IMR-90 (cell line): ENCODE measurements at regions of chr17 and their contacts with region 1.

Region 1: DNA sequence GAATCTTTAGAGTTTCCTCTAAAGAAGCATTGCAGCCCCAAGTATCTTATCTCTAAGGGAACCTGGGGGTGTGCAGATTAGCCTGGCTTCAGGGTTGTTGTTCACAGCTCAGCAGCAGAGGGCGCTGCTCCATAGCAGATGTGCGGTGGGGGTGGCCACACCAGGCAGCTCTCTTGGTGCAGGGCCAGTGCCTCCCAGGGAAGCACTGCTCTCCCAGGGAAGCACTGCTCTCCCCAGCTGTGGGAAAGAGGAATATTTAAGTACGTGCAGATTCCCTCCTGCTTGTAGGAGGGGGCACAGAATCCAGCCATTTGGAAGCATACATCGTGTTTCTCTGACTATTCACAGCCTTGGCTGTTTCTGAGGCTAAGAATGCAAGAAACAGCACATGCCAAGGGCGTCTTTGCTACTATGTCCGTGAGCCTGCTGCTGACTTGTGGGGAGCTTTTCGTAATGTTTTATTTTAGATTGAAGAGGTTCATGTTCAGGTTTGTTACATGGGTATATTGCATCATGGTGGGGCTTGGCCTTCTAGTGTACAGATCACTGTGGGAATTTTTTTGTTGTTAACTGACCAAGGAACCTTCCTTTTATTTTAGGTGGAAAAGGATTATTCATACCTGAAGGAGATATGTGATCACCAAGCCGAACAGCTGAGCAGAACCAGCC is 217.8 kb downstream of the SPECC1 start:
- DNase-seq: peak; percentile 83
- ATAC-seq: peak; percentile 90
- H3K4me3 ChIP-seq: no peak overlapping the region
- H3K27ac ChIP-seq: peak overlapping the region; percentile 29; the same call in 1 of the 2 replicates
- H3K4me1 ChIP-seq: peaks cover 26% of the 10 kb centered on the region
- H3K27me3 ChIP-seq: no peaks in the 10 kb centered on the region
- CTCF ChIP-seq: peak; percentile 95
- POLR2A ChIP-seq: peak; percentile 43; the same call in 1 of the 2 replicates
- RAD21 ChIP-seq: peak; percentile 96

Region 2: GRCh38 chr17:19857640-19858039 is 369.3 kb before region 1 on chr17:
- CTCF ChIA-PET with region 1: no interaction called
- POLR2A ChIA-PET with region 1: no interaction called
- dilution Hi-C with region 1: no loop called
- in situ Hi-C with region 1: no loop called
- intact Hi-C with region 1: no loop called
- DNase-seq: no peak
- ATAC-seq: peak; percentile 27; the same call in 1 of the 2 replicates
- H3K4me3 ChIP-seq: no peak overlapping the region
- H3K27ac ChIP-seq: no peak overlapping the region
- H3K4me1 ChIP-seq: no peaks in the 10 kb centered on the region
- H3K27me3 ChIP-seq: no peaks in the 10 kb centered on the region
- CTCF ChIP-seq: no peak
- POLR2A ChIP-seq: no peak
- RAD21 ChIP-seq: no peak

Region 3: DNA sequence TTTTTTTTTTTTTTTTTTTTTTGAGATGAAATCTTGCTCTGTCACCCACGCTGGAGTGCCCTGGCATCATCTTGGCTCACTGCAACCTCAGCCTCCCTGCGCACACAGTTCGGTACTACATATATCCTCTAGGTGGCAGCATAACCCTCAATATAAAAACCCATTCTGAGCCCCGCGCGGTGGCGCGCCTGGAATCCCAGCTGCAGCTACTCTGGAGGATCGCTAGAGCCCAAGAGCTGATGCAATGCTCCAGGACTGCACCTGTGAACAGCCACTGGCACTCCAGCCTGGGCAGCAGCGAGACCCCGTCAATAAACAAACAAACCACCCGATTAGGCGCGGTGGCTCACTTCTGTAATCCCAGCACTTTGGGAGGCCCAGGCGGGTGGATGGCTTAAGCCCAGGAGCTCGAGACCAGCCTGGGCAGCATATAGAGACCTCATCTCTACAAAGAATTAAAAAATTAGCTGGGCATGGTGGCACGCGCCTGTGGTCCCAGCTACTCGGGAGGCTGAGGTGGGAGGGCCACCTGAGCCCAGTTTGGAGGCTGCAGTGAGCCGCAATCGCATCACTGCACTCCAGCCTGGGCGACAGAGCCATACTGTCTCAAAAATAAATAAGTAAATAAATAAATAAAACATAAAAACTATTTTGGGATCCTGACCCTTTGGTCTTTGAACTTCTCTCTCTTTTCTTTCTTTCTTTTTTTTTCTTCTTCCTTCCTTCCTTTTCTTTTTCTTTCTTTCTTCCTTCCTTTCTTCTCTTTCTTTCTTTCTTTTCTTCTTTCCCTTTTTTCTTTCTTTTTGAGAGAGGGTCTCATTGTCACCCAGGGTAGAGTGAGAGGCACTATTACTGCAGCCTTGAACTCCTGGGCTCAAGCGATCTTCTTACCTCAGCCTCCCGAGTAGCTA is 233.9 kb before region 1 on chr17:
- CTCF ChIA-PET with region 1: no interaction called
- POLR2A ChIA-PET with region 1: no interaction called
- dilution Hi-C with region 1: no loop called
- in situ Hi-C with region 1: no loop called
- intact Hi-C with region 1: loop called (anchors 5 kb)
- DNase-seq: peak; percentile 84
- ATAC-seq: peak; percentile 99
- H3K4me3 ChIP-seq: no peak overlapping the region
- H3K27ac ChIP-seq: no peak overlapping the region
- H3K4me1 ChIP-seq: no peaks in the 10 kb centered on the region
- H3K27me3 ChIP-seq: no peaks in the 10 kb centered on the region
- CTCF ChIP-seq: peak; percentile 90
- POLR2A ChIP-seq: no peak
- RAD21 ChIP-seq: peak; percentile 83

Region 4: GRCh38 chr17:20121359-20122253 is 105.3 kb before region 1 on chr17:
- CTCF ChIA-PET with region 1: interaction called, 3 read pairs
- POLR2A ChIA-PET with region 1: no interaction called
- dilution Hi-C with region 1: no loop called
- in situ Hi-C with region 1: no loop called
- intact Hi-C with region 1: loop called (anchors 1 kb)
- DNase-seq: peak; percentile 62
- ATAC-seq: peak; percentile 79
- H3K4me3 ChIP-seq: no peak overlapping the region
- H3K27ac ChIP-seq: no peak overlapping the region
- H3K4me1 ChIP-seq: peaks cover 5% of the 10 kb centered on the region
- H3K27me3 ChIP-seq: no peaks in the 10 kb centered on the region
- CTCF ChIP-seq: peak; percentile 92
- POLR2A ChIP-seq: 0 out of 2 replicates have a peak, but pooled peaks have one; percentile 44
- RAD21 ChIP-seq: peak; percentile 94

Region 5: GRCh38 chr17:20155258-20156195 is 71.4 kb before region 1 on chr17:
- CTCF ChIA-PET with region 1: interaction called, 3 read pairs
- POLR2A ChIA-PET with region 1: no interaction called
- dilution Hi-C with region 1: no loop called
- in situ Hi-C with region 1: no loop called
- intact Hi-C with region 1: loop called (anchors 5 kb)
- DNase-seq: peak; percentile 96
- ATAC-seq: peak; percentile 97
- H3K4me3 ChIP-seq: peak overlapping the region; percentile 97
- H3K27ac ChIP-seq: peak overlapping the region; percentile 88; the same call in 1 of the 2 replicates
- H3K4me1 ChIP-seq: peaks cover 2% of the 10 kb centered on the region
- H3K27me3 ChIP-seq: no peaks in the 10 kb centered on the region
- CTCF ChIP-seq: no peak
- POLR2A ChIP-seq: peak; percentile 62; the same call in 1 of the 2 replicates
- RAD21 ChIP-seq: 0 out of 2 replicates have a peak, but pooled peaks have one; percentile 2

Region 6: DNA sequence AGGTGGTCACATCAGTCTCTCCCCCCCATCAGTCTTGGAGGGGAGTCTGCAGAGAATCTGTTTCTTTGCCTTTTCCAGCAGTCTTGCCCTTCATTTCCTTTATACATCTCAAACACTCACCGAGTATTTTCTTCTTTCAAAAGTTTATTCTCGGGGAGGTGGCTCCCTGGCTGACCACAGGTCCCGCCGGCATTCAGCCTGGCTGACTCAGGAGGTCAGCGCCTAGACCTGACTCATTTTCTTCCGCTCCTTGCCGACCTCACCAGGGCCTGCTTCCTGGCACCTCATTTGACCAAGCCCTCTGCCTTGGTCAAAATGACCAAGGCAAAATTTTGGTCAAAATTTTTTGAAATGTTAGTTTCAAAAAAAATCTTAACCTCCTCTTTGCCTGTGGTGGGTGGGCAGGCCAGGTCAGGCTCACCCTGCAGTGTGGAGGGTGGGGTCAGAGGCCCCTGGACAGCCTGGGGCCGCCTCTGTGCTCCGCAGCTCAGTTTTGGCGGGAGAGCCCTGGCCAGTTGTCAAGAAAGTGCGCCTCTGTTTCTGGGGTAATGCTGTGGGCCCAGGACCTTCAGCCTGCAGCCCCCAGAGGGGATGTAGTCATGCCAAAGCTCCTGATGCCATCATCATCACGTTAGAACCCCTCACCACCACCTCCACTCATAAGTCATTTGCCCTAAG is 52.2 kb before region 1 on chr17:
- CTCF ChIA-PET with region 1: no interaction called
- POLR2A ChIA-PET with region 1: no interaction called
- dilution Hi-C with region 1: no loop called
- in situ Hi-C with region 1: no loop called
- intact Hi-C with region 1: no loop called
- DNase-seq: peak; percentile 76
- ATAC-seq: peak; percentile 85
- H3K4me3 ChIP-seq: no peak overlapping the region
- H3K27ac ChIP-seq: peak overlapping the region; percentile 53
- H3K4me1 ChIP-seq: peaks cover 30% of the 10 kb centered on the region
- H3K27me3 ChIP-seq: no peaks in the 10 kb centered on the region
- CTCF ChIP-seq: no peak
- POLR2A ChIP-seq: no peak
- RAD21 ChIP-seq: no peak

Region 7: GRCh38 chr17:20315821-20316220 is 88.9 kb after region 1 on chr17:
- CTCF ChIA-PET with region 1: interaction called, 5 read pairs
- POLR2A ChIA-PET with region 1: no interaction called
- dilution Hi-C with region 1: no loop called
- in situ Hi-C with region 1: loop called (anchors 10 kb)
- intact Hi-C with region 1: loop called (anchors 2 kb)
- DNase-seq: peak; percentile 4
- ATAC-seq: no peak
- H3K4me3 ChIP-seq: no peak overlapping the region
- H3K27ac ChIP-seq: no peak overlapping the region
- H3K4me1 ChIP-seq: no peaks in the 10 kb centered on the region
- H3K27me3 ChIP-seq: no peaks in the 10 kb centered on the region
- CTCF ChIP-seq: no peak
- POLR2A ChIP-seq: no peak
- RAD21 ChIP-seq: no peak

Region 8: GRCh38 chr17:20852239-20852989 is 625.5 kb after region 1 on chr17:
- CTCF ChIA-PET with region 1: no interaction called
- POLR2A ChIA-PET with region 1: no interaction called
- dilution Hi-C with region 1: no loop called
- in situ Hi-C with region 1: no loop called
- intact Hi-C with region 1: loop called (anchors 5 kb)
- DNase-seq: no peak
- ATAC-seq: peak; percentile 57
- H3K4me3 ChIP-seq: peak overlapping the region; percentile 29; the same call in 1 of the 2 replicates
- H3K27ac ChIP-seq: no peak overlapping the region
- H3K4me1 ChIP-seq: no peaks in the 10 kb centered on the region; the same call in 1 of the 2 replicates
- H3K27me3 ChIP-seq: peaks cover 21% of the 10 kb centered on the region
- CTCF ChIP-seq: no peak
- POLR2A ChIP-seq: no peak
- RAD21 ChIP-seq: no peak

Region 9: GRCh38 chr17:20992987-20993862 is 766.3 kb after region 1 on chr17:
- CTCF ChIA-PET with region 1: no interaction called
- POLR2A ChIA-PET with region 1: no interaction called
- dilution Hi-C with region 1: no loop called
- in situ Hi-C with region 1: no loop called
- intact Hi-C with region 1: loop called (anchors 10 kb)
- DNase-seq: peak; percentile 71
- ATAC-seq: peak; percentile 82
- H3K4me3 ChIP-seq: no peak overlapping the region
- H3K27ac ChIP-seq: no peak overlapping the region
- H3K4me1 ChIP-seq: peaks cover 2% of the 10 kb centered on the region; the same call in 1 of the 2 replicates
- H3K27me3 ChIP-seq: peaks cover 3% of the 10 kb centered on the region; the same call in 1 of the 2 replicates
- CTCF ChIP-seq: peak; percentile 93
- POLR2A ChIP-seq: 0 out of 2 replicates have a peak, but pooled peaks have one; percentile 19
- RAD21 ChIP-seq: peak; percentile 87